Endothelial cell of umbilical vein (primary cell): ENCODE measurements at regions of chr11 and their contacts with region 1.

Region 1: GRCh38 chr11:86947541-86947940 is 7.7 kb downstream of the FZD4 start:
- DNase-seq: peak; percentile 69
- H3K4me3 ChIP-seq: no peak overlapping the region
- H3K27ac ChIP-seq: peak overlapping the region; percentile 56
- H3K4me1 ChIP-seq: peaks cover 70% of the 10 kb centered on the region
- H3K27me3 ChIP-seq: no peaks in the 10 kb centered on the region
- CTCF ChIP-seq: no peak
- POLR2A ChIP-seq: no peak

Region 2: GRCh38 chr11:87368858-87369480 is 421.4 kb after region 1 on chr11:
- CTCF ChIA-PET with region 1: no interaction called
- POLR2A ChIA-PET with region 1: no interaction called
- dilution Hi-C with region 1: no loop called
- intact Hi-C with region 1: loop called (anchors 2 kb)
- DNase-seq: peak; percentile 97
- H3K4me3 ChIP-seq: peak overlapping the region in 1 of 3 experiments; percentile 5
- H3K27ac ChIP-seq: peak overlapping the region; percentile 94
- H3K4me1 ChIP-seq: peaks cover 47% of the 10 kb centered on the region
- H3K27me3 ChIP-seq: no peaks in the 10 kb centered on the region
- CTCF ChIP-seq: no peak
- POLR2A ChIP-seq: peak; percentile 65